ENCODE measurements at regions of chr10 and their contacts with region 1.

Region 1: GRCh38 chr10:78302989-78303854 is 269.6 kb downstream of the RPS24 start:
- DNase-seq: peak; percentile 95
- H3K4me3 ChIP-seq: peak overlapping the region; percentile 35 to 62 (median 52)
- H3K27ac ChIP-seq: peak overlapping the region; percentile 85 to 91 (median 88)
- H3K4me1 ChIP-seq: peaks cover 0 to 54% (median 37%) of the 10 kb centered on the region in 4 donors
- H3K27me3 ChIP-seq: no peaks in the 10 kb centered on the region
- CTCF ChIP-seq: peak; percentile 65 to 80 (median 71)
- EP300 ChIP-seq: peak in 1 of 4 donors; percentile 28
- POLR2A ChIP-seq: peak; percentile 32 to 41

Region 2: DNA sequence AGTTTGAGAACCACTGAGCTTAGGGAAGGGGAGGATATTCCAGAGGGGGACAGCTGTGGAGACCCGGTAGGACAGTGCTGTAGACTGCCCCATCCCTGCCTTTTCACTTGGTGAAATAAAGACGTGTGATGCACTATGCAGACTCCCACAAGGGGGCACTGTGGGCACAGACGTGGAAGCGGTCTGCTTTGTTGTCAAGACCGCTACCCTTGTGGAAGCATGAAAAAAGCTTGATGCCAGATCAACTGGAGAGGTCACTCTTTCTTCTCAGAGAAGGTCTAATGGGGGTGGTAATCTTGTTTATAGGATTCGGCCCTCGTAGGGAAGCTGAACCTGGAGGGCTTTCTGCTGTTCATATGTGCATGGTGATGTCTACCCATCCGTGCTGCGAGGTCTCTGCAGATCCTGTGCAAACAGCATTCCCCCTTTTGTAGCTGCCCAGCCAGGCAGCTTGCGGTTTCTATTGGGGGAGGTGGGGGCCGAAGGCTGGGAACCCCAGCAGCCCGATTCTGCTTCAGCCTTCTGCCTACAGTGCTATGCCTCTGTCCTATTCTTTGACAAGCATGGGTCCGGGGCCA is 255.8 kb before region 1 on chr10:
- intact Hi-C with region 1: loop called (anchors 5 kb)
- DNase-seq: peak; percentile 91
- H3K4me3 ChIP-seq: no peak overlapping the region
- H3K27ac ChIP-seq: peak overlapping the region in 1 of 4 donors; percentile 6
- H3K4me1 ChIP-seq: peaks cover 0 to 16% (median 9%) of the 10 kb centered on the region in 4 donors
- H3K27me3 ChIP-seq: no peaks in the 10 kb centered on the region
- CTCF ChIP-seq: peak; percentile 83 to 88 (median 86)
- EP300 ChIP-seq: no peak
- POLR2A ChIP-seq: no peak

Region 3: DNA sequence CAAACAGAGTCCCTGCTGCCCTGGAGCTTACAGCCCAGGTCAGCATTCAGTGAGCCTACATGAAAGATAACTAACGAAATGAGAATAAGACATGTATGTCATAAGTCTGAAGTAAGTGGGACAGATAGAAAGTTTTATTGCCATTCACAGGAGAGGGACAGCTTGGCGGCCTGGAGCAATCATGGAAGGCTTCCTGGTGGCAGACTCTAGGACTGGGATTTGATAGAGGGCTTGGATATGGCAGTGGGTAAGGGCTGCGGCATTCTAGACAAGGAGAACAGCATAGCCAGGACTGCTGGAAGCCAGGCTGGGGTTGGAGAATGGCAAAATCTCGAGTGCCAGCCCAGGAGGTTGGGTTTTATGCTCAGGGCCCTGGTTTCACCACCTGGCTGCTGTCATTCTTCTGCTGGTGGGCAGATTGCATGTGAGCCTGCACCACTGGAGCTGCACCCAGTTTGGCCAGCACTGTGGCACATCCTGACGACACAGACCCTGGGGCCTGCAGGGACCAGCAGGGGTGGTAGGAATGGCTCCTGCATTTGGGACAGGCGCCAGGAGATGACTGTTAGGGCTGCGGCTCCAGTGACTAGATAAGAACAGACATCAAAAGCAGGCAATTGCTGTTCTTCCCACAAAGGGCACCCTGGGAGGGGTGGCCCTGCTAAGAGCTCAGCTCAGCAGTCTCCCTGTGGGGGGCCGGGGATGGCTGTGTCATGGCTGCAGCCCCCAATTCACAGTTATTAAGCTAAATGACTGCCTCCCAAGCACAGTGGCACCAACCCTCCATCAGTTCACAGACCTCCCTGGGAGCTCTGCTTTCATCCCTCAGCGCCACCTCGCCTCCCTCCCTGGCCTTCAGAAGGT is 108.5 kb before region 1 on chr10:
- intact Hi-C with region 1: no loop called
- DNase-seq: no peak
- H3K4me3 ChIP-seq: no peak overlapping the region
- H3K27ac ChIP-seq: no peak overlapping the region
- H3K4me1 ChIP-seq: no peaks in the 10 kb centered on the region
- H3K27me3 ChIP-seq: no peaks in the 10 kb centered on the region
- CTCF ChIP-seq: no peak
- EP300 ChIP-seq: no peak
- POLR2A ChIP-seq: no peak

Region 4: DNA sequence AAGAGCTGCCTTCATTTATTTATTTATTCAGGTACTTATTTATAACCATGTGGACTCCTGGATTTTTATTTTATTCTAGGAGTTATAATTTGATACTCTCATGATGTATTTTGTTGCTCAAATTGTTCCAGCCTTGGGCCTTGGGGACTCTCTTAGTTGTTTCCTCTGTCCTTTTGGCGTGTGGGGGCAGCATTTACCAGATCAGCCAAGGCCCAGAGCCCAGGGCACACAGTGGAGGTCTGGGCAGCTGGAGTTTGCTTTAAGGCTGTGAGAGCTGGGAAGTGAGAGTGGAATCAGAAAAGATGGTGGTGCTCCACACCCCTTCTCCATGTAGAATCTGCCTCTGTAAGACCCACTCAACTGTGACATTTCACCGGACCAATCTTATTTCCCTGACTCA is 129.4 kb after region 1 on chr10:
- intact Hi-C with region 1: loop called (anchors 5 kb)
- DNase-seq: peak; percentile 61
- H3K4me3 ChIP-seq: no peak overlapping the region
- H3K27ac ChIP-seq: peak overlapping the region; percentile 27 to 58 (median 42)
- H3K4me1 ChIP-seq: peaks cover 0 to 65% (median 52%) of the 10 kb centered on the region in 4 donors
- H3K27me3 ChIP-seq: no peaks in the 10 kb centered on the region
- CTCF ChIP-seq: no peak
- EP300 ChIP-seq: no peak
- POLR2A ChIP-seq: no peak

Region 5: GRCh38 chr10:78756604-78757349 is 453.6 kb after region 1 on chr10:
- intact Hi-C with region 1: loop called (anchors 10 kb)
- DNase-seq: peak; percentile 95
- H3K4me3 ChIP-seq: no peak overlapping the region
- H3K27ac ChIP-seq: peak overlapping the region; percentile 45 to 74 (median 68)
- H3K4me1 ChIP-seq: peaks cover 0 to 23% (median 18%) of the 10 kb centered on the region in 4 donors
- H3K27me3 ChIP-seq: no peaks in the 10 kb centered on the region
- CTCF ChIP-seq: no peak
- EP300 ChIP-seq: peak in 2 of 4 donors; percentile 61 to 78
- POLR2A ChIP-seq: no peak

Region 6: DNA sequence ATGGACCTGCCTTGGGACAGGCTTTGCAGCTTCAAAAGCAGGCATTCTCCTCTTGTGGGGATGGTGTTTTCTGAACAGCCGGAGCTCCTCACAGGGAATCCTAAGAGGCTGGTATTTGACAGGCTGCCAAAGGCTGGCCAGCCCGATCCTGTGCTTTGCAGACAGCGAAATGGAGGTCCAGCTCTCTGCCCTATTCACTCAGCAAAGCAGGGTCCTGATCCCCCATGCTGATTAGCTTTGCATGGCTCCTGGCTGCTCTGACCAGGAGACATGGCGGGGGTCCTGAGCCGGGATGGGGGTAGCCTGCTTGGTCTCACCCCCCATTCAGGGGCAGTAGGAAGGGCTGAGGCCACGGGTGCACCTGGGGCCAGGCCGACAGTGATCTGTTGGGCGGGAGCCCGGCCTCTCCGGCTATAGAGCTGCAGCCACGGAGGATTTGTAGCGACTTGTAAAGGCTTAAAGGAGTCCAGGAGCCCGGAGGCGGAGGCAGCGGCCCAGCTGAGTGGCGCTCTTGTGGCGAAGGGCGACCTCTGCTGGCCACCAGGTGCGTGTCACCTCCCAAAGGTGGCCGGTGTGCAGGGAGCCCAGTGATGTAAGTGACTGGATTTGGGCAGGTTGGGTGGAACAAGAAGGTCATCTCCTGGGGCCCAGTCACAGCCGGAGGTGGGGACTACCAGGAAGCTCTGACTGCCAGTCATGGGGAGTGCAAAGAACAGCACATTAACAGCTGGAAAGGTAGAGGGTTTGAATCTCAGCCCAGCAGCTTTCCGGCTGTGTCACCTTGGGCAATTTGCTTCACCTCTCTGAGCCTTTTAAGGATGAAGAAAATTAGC is 892.1 kb after region 1 on chr10:
- intact Hi-C with region 1: loop called (anchors 5 kb)
- DNase-seq: peak; percentile 95
- H3K4me3 ChIP-seq: no peak overlapping the region
- H3K27ac ChIP-seq: peak overlapping the region; percentile 78 to 86 (median 80)
- H3K4me1 ChIP-seq: peaks cover 0 to 51% (median 48%) of the 10 kb centered on the region in 4 donors
- H3K27me3 ChIP-seq: no peaks in the 10 kb centered on the region
- CTCF ChIP-seq: peak; percentile 92 to 97 (median 94)
- EP300 ChIP-seq: peak in 1 of 4 donors; percentile 17
- POLR2A ChIP-seq: no peak